ENCODE measurements at regions of chr9 and their contacts with region 1.

Region 1: GRCh38 chr9:90219548-90220118 is 423.0 kb downstream of the DIRAS2 start:
- DNase-seq: peak in 5 of 9 donors; percentile 14 to 33 (median 19)
- ATAC-seq: peak; percentile 61
- H3K4me3 ChIP-seq: no peak overlapping the region
- H3K4me3 Mint-ChIP-seq: no peak overlapping the region
- H3K27ac ChIP-seq: no peak overlapping the region
- H3K27ac Mint-ChIP-seq: no peak overlapping the region
- H3K4me1 ChIP-seq: no peaks in the 10 kb centered on the region
- H3K4me1 Mint-ChIP-seq: peaks cover 0 to 8% (median 3%) of the 10 kb centered on the region in 7 donors
- H3K27me3 ChIP-seq: no peaks in the 10 kb centered on the region
- H3K27me3 Mint-ChIP-seq: peaks cover 0 to 31% (median 12%) of the 10 kb centered on the region in 5 donors

Region 2: DNA sequence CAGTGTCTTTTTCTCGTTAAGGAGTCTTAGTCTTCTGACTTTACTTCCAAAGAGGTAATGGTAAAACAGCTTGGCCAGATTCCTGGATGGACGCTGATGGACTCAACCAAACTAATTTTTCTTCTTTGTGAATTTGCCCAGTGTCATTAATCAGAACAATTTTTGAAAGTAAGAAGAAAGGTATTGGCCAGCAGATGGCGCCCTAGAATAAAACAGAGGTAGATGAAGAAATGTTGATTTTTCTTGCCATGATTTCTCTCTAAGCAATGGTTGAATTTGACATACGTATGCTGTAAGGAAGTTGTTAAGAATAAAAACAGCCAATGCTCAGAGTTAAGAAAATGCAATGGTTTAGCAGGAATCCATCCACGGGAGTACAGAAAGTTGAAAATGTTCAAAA is 77.1 kb before region 1 on chr9:
- CTCF ChIA-PET with region 1: no interaction called
- POLR2A ChIA-PET with region 1: no interaction called
- intact Hi-C with region 1: loop called (anchors 1 kb)
- DNase-seq: peak in 7 of 9 donors; percentile 17 to 64 (median 49)
- ATAC-seq: peak; percentile 49
- H3K4me3 ChIP-seq: no peak overlapping the region
- H3K4me3 Mint-ChIP-seq: no peak overlapping the region
- H3K27ac ChIP-seq: no peak overlapping the region
- H3K27ac Mint-ChIP-seq: no peak overlapping the region
- H3K4me1 ChIP-seq: no peaks in the 10 kb centered on the region
- H3K4me1 Mint-ChIP-seq: peaks cover 0 to 6% (median 5%) of the 10 kb centered on the region in 7 donors
- H3K27me3 ChIP-seq: no peaks in the 10 kb centered on the region
- H3K27me3 Mint-ChIP-seq: peaks cover 23 to 59% (median 28%) of the 10 kb centered on the region in 5 donors

Region 3: DNA sequence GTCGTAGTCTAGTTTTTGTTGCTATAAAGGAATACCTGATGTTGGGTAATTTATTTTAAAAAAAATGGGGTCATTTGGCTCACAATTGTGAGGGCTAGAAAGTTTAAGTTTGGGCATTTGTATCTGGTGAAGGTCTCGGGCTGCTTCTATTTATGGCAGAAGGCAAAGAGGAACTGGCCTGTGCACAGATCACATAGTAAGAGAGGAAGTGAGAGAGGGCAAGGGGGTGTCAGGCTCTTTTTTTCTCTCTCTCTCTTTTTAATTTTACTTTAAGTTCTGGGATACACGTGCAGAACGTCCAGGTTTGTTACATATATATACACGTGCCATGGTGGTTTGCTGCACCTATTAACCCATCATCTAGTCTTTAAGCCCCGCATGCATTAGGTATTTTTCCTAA is 30.3 kb before region 1 on chr9:
- CTCF ChIA-PET with region 1: no interaction called
- POLR2A ChIA-PET with region 1: no interaction called
- intact Hi-C with region 1: no loop called
- DNase-seq: no peak
- ATAC-seq: peak; percentile 57
- H3K4me3 ChIP-seq: no peak overlapping the region
- H3K4me3 Mint-ChIP-seq: peak overlapping the region in 3 of 10 donors; percentile 10 to 25 (median 12)
- H3K27ac ChIP-seq: no peak overlapping the region
- H3K27ac Mint-ChIP-seq: peak overlapping the region in 1 of 9 donors; percentile 26
- H3K4me1 ChIP-seq: peaks cover 0 to 2% of the 10 kb centered on the region in 2 donors
- H3K4me1 Mint-ChIP-seq: peaks cover 5 to 62% (median 37%) of the 10 kb centered on the region in 7 donors
- H3K27me3 ChIP-seq: no peaks in the 10 kb centered on the region
- H3K27me3 Mint-ChIP-seq: peaks cover 4 to 37% (median 23%) of the 10 kb centered on the region in 5 donors

Region 4: GRCh38 chr9:90569511-90569910 is 349.9 kb after region 1 on chr9:
- CTCF ChIA-PET with region 1: no interaction called
- POLR2A ChIA-PET with region 1: no interaction called
- intact Hi-C with region 1: no loop called
- DNase-seq: no peak
- ATAC-seq: no peak
- H3K4me3 ChIP-seq: no peak overlapping the region
- H3K4me3 Mint-ChIP-seq: no peak overlapping the region
- H3K27ac ChIP-seq: no peak overlapping the region
- H3K27ac Mint-ChIP-seq: no peak overlapping the region
- H3K4me1 ChIP-seq: no peaks in the 10 kb centered on the region
- H3K4me1 Mint-ChIP-seq: peaks cover 0 to 2% (median 0%) of the 10 kb centered on the region in 7 donors
- H3K27me3 ChIP-seq: no peaks in the 10 kb centered on the region
- H3K27me3 Mint-ChIP-seq: peaks cover 9 to 31% (median 25%) of the 10 kb centered on the region in 5 donors